Caco-2 (cell line): ENCODE measurements at regions of chr5 and their contacts with region 1.

Region 1: GRCh38 chr5:176415952-176416924 is at the start of gene CLTB:
- DNase-seq: peak; percentile 85 to 89
- H3K4me3 ChIP-seq: peak within 1 kb of the TSS; percentile 92
- H3K4me3 Mint-ChIP-seq: peak within 1 kb of the TSS; percentile 77
- H3K27ac Mint-ChIP-seq: peak within 1 kb of the TSS; percentile 85
- H3K4me1 ChIP-seq: peaks cover 23% of the 10 kb centered on the region
- H3K4me1 Mint-ChIP-seq: peaks cover 17% of the 10 kb centered on the region
- H3K27me3 ChIP-seq: no peaks in the 10 kb centered on the region
- H3K27me3 Mint-ChIP-seq: no peaks in the 10 kb centered on the region
- CTCF ChIP-seq: peak; percentile 38 to 72
- total RNA-seq, gene CLTB: 78.9 and 80.0 TPM in 2 replicates

Region 2: DNA sequence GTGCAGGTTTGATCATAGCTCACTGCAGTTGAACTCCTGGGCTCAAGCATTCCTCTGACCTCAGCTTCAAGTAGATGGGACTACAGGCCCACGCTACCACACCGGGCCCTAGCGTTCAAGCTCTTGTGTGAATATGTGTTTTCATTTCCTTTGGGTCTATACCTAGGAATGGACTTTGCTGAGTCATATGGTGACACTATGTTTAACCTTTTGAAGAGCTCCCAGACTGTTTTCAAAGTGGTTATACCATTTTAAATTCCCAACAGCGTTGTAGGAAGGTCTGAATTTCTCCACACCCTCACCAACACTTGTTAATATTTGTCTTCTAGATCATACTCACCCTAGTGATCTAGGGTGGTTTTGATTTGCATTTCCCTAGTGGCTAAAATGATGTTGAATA is 65.5 kb after region 1 on chr5:
- CTCF ChIA-PET with region 1: no interaction called
- POLR2A ChIA-PET with region 1: no interaction called
- intact Hi-C with region 1: loop called (anchors 10 kb)
- DNase-seq: no peak
- H3K4me3 ChIP-seq: no peak overlapping the region
- H3K4me3 Mint-ChIP-seq: no peak overlapping the region
- H3K27ac Mint-ChIP-seq: no peak overlapping the region
- H3K4me1 ChIP-seq: no peaks in the 10 kb centered on the region
- H3K4me1 Mint-ChIP-seq: no peaks in the 10 kb centered on the region
- H3K27me3 ChIP-seq: no peaks in the 10 kb centered on the region
- H3K27me3 Mint-ChIP-seq: no peaks in the 10 kb centered on the region
- CTCF ChIP-seq: no peak

Region 3: GRCh38 chr5:176537608-176538504 is 121.6 kb after region 1 on chr5:
- CTCF ChIA-PET with region 1: interaction called, 6 read pairs
- POLR2A ChIA-PET with region 1: interaction called, 22 read pairs
- intact Hi-C with region 1: loop called (anchors 1 kb)
- DNase-seq: peak; percentile 97 to 100
- H3K4me3 ChIP-seq: peak overlapping the region; percentile 90
- H3K4me3 Mint-ChIP-seq: peak overlapping the region; percentile 96
- H3K27ac Mint-ChIP-seq: peak overlapping the region; percentile 96
- H3K4me1 ChIP-seq: peaks cover 14% of the 10 kb centered on the region
- H3K4me1 Mint-ChIP-seq: peaks cover 29% of the 10 kb centered on the region
- H3K27me3 ChIP-seq: no peaks in the 10 kb centered on the region
- H3K27me3 Mint-ChIP-seq: no peaks in the 10 kb centered on the region
- CTCF ChIP-seq: no peak

Region 4: DNA sequence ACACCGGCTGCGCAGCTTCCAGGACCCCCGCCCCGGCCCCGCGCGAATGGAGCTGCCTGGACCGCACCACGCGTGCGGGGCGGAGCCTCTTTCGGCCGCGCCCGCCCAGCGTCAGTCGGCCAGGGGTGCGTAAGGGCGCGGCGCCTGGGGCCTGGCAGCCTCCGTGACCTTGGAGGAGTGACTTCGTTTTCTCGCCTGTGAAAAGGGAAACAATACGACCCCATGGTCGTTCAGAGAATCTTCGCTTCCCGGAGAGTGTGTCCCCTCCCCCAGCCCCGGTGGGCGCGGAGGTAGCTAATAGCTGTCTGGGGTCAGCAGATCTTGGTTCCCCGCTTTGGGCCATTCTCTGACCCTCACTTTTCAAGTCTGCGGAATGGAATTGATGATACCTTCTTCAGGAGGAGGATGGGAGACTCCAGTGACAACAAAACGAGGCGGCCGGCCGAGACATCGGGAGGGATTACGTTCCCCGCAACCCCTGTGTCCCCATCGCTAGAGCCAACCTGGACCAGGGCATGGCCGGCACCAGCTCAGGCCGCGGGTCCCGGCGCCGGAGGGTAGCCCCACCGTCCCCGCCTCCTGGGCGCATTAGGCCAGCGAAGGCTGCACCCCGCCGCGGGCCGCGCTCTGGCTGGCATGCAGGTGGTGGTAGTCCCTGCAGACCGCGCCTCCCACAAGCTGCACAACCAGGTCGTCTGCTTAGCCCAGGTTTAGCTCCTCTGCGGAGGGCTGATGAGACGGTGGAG is 127.4 kb after region 1 on chr5:
- CTCF ChIA-PET with region 1: interaction called, 6 read pairs
- POLR2A ChIA-PET with region 1: interaction called, 4 read pairs
- intact Hi-C with region 1: loop called (anchors 1 kb)
- DNase-seq: peak; percentile 81 to 82
- H3K4me3 ChIP-seq: peak overlapping the region; percentile 71
- H3K4me3 Mint-ChIP-seq: peak overlapping the region; percentile 85
- H3K27ac Mint-ChIP-seq: peak overlapping the region; percentile 86
- H3K4me1 ChIP-seq: peaks cover 33% of the 10 kb centered on the region
- H3K4me1 Mint-ChIP-seq: peaks cover 29% of the 10 kb centered on the region
- H3K27me3 ChIP-seq: no peaks in the 10 kb centered on the region
- H3K27me3 Mint-ChIP-seq: no peaks in the 10 kb centered on the region
- CTCF ChIP-seq: no peak

Region 5: GRCh38 chr5:176664886-176665285 is 248.6 kb after region 1 on chr5:
- CTCF ChIA-PET with region 1: no interaction called
- POLR2A ChIA-PET with region 1: no interaction called
- intact Hi-C with region 1: no loop called
- DNase-seq: no peak
- H3K4me3 ChIP-seq: no peak overlapping the region
- H3K4me3 Mint-ChIP-seq: no peak overlapping the region
- H3K27ac Mint-ChIP-seq: no peak overlapping the region
- H3K4me1 ChIP-seq: no peaks in the 10 kb centered on the region
- H3K4me1 Mint-ChIP-seq: no peaks in the 10 kb centered on the region
- H3K27me3 ChIP-seq: no peaks in the 10 kb centered on the region
- H3K27me3 Mint-ChIP-seq: peaks cover 11% of the 10 kb centered on the region
- CTCF ChIP-seq: no peak